ENCODE measurements at regions of chr16 and their contacts with region 1.

Region 1: GRCh38 chr16:66977341-66978113 is 10.9 kb upstream of the CES4A start:
- DNase-seq: peak; percentile 86 to 98
- H3K4me3 ChIP-seq: no peak overlapping the region
- CTCF ChIP-seq: peak in 1 of 3 donors; percentile 94
- POLR2A ChIP-seq: no peak

Region 2: GRCh38 chr16:66758086-66758485 is 219.4 kb before region 1 on chr16:
- intact Hi-C with region 1: no loop called
- DNase-seq: no peak
- H3K4me3 ChIP-seq: no peak overlapping the region
- CTCF ChIP-seq: no peak
- POLR2A ChIP-seq: no peak

Region 3: DNA sequence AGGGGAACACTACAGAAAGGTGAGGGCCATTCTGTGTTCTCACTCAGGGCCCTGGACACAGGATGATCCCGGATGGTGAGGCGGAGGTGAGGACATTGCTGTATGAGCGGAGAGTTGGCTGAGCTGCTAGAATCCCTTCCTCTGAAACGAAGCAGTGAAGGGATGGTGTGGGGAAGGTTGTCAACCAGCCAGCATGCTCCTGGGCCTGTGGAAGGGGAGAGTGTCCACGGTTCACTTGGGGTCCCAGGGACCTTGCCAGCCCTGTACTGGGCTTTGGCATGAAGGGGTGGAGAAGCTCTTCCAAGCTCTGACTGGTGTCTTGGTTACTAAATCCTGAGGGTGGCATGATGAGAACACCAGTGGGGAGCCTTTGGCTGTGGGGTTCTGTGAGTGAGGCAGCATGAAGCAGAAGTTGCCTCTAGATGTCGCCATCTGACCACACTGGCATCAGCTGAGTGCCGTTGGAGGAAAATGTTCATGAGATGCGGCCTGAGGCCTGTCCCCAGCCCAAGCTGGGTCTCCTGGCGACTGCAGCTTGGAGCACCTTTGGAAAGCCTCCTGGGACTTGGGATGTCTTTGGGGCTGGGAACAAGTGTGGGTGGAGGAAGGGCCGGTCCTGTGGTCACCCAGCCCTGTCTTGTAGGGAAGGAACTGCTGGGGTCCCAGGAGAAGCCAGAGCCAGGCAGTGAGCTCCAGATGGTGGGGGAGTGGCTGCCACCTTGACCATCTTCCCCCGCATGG is 82.4 kb before region 1 on chr16:
- intact Hi-C with region 1: loop called (anchors 10 kb)
- DNase-seq: peak in 1 of 2 donors; percentile 54
- H3K4me3 ChIP-seq: no peak overlapping the region
- CTCF ChIP-seq: peak in 1 of 3 donors; percentile 37
- POLR2A ChIP-seq: no peak

Region 4: DNA sequence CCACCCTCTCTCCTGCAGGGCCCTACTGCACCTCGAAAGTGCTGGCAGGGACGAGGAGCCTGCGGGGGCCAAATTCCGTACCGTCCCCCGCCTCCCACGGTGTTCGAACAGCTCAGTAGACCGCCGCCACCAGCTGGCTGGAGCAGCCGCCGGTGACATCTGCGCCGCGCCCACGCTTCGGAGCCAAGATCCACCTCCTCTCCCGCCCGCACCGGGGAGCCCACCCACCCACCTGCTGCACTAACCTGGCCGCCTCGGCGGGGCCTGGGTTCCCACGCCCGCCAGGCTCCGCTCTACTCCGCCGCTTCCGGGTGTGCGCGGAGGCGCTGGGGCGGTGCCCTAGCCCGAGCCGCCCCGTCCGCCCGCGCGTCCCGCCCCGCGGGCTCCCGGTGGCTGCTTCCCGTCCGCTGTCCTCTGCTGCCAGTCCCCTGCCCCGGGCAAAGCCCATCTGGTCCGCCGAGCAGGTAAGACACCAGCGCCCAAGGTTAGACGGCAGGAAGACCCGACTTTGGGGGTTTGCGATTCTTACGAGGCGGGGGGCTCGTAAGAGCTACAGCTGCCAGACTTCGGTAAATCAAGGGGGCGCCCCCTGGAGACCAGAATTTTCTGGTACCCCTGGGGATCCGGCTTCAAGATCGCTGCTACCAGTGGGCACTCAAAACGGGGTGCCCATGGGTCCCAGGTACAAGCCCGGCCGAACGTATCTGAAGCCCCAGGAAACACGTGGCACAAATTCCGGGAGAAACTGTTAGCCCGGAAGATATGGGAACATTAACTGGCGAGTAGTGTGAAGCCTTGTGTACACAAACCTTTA is 182.3 kb after region 1 on chr16 and contains the starts of genes FBXL8 and TRADD:
- intact Hi-C with region 1: loop called (anchors 5 kb)
- DNase-seq: peak; percentile 72 to 95
- H3K4me3 ChIP-seq: peak within 1 kb of the TSS; percentile 89
- CTCF ChIP-seq: no peak
- POLR2A ChIP-seq: peak in 1 of 2 donors; percentile 19
- total RNA-seq, gene FBXL8: 47.3 to 97.8 (median 67.9) TPM
- total RNA-seq, gene TRADD: 46.3 to 51.0 (median 49.4) TPM

Measured in lower leg skin (tissue), 4 donors.